HEK293T (cell line): ENCODE measurements at regions of chr10 and their contacts with region 1.

Region 1: DNA sequence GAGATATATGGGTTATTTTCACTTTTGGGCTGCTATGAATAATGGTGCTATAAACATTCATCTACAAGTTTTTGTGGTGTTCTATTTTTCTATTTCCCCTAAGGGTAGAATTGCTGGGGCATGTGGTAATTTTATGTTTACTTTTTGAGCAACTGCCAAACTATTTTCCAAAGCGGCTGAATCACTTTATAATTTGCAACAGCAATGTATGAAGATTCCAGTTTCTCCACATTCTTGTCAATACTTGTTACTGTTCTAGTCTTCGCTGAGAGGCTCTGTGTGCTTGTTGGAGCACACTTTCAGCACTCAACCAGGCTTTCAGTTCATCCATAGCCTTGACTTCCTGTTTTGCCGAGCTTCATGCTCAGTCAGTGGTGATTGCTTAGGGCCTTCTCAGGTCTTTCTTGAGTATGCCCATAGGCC is 39.0 kb downstream of the ADK start:
- DNase-seq: no peak

Region 2: GRCh38 chr10:74056036-74056818 is 133.8 kb before region 1 on chr10:
- CTCF ChIA-PET with region 1: no interaction called
- POLR2A ChIA-PET with region 1: no interaction called
- DNase-seq: no peak

Region 3: DNA sequence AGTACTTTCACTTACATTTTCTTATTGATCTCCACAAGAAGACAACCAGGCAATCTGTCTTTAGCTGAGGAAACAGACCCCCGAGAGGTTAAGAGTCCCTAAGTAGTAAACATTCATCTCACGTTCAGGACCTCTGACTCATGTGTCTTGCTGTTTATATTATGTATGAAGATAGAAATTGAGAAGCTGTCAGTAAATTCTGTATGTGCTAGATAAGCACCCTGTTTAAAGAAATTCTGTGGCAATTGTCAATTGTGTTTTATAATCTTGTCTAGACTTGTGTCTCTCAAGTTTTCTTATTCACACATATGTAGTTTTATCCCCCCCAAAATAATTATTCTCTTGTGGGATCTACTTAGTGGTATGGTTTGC is 24.5 kb before region 1 on chr10:
- CTCF ChIA-PET with region 1: no interaction called
- POLR2A ChIA-PET with region 1: no interaction called
- DNase-seq: no peak

Region 4: DNA sequence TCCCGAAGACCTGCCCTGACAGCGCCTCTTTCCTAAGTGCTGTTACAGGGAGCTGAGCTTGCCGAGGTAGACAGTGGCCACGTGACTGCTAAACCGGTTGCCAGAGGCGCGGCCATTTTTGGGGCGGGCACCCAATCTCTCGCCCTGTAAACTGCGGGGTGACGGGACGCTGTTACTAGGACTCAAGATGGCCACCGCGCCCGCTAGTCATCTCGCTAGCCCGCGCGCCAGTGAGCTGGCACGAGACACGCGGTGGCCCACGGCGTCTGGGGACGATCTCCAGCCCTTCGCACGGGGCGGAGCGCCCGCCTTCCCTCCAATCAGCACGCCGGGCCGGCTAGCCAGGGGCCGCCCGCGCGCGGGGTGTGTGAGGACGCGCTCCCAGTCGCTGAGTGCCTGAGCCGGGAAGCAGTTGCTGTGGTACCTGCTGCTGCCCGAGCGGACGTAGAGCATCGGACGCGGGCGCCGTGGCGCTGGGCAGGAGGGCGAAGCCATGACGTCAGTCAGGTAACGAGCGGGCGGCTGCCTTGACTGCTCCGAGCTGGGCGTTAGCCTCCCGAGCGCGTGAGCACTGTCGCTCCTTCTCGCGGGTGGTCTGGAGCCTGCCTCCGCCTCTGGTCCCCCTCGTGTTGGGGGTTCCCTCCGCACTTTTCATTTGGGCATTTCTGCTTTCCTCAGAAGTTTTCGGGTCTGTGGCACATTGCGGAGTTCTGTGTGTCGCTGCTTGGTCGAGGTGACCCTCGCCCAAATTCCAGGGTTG is 13.4 kb before region 1 on chr10:
- CTCF ChIA-PET with region 1: no interaction called
- POLR2A ChIA-PET with region 1: interaction called, 13 read pairs
- DNase-seq: peak; percentile 79